Gastrocnemius medialis (tissue), 4 donors: ENCODE measurements at regions of chr19 and their contacts with region 1.

Region 1: DNA sequence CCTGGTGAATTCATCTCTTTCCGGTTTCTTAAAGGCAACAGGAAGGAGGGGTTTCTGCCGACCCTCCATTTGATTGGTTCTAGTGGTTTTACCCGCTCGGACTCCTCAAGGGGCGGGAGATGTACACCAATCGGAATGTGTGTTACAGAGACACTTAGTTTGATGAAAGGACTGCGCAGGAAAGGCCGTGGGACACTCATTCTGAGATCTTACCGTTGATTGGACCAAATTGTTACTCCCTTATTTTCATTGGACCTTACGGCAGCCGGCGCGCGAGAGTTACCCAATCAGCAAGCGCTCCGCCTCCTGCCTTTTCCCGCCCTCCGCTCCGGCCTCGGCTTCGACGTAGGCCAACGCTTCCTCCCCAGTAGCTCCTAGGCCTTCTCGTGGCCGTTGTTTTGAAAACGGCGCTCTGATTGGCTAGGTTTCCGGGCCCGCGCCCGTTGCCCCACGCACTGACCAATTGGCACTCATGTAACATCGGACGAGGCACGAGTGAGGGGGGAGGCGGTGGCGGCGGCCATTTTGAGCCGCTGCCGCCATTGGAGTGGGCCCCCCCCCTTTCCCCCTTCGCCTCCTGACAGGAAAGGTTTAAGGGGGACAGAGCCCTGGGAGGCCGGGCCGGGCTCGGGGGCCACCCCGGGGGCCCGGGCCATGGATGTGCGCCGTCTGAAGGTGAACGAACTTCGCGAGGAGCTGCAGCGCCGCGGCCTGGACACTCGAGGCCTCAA is at the start of gene HNRNPUL1:
- DNase-seq: peak; percentile 99
- ATAC-seq: peak; percentile 40 to 81
- H3K4me3 ChIP-seq: peak within 1 kb of the TSS; percentile 64 to 95 (median 87)
- H3K27ac ChIP-seq: peak within 1 kb of the TSS; percentile 97 to 100 (median 99)
- H3K4me1 ChIP-seq: peaks cover 26 to 32% of the 10 kb centered on the region in 2 donors
- H3K27me3 ChIP-seq: no peaks in the 10 kb centered on the region
- CTCF ChIP-seq: peak in 3 of 5 experiments; percentile 26 to 43 (median 37)
- POLR2A ChIP-seq: peak; percentile 39 to 58
- total RNA-seq, gene HNRNPUL1: 49.5 to 101 (median 92.4) TPM

Region 2: DNA sequence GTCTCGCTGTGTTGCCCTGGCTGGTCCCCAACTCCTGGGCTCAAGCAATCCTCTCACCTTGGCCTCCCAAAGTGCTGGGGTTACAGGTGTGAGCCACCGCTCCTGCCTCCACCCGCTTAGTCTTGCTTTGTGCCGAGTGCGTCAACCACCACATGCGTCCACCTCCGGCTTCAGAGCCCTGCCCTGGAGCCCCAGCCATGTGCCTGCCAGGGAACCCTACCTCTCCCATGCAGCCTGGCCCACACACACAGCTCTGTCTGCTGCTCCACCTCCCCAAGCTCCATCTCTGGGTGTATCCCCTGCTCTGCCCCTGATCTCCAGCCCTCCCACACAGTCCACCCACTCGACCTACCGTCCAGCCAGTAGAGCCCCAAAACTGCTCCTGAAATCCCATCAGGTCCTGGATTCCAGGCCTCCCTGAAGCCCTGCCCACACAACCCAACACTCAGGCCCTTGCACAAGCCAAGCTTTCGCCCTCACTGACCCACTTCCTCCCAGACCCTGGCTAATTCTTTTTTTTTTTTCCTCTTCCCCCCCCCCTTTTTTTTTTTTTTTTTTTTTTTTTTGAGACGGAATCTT is 140.2 kb before region 1 on chr19:
- in situ Hi-C with region 1: no loop called
- intact Hi-C with region 1: loop called (anchors 2 kb)
- DNase-seq: no peak
- ATAC-seq: no peak
- H3K4me3 ChIP-seq: no peak overlapping the region
- H3K27ac ChIP-seq: no peak overlapping the region
- H3K4me1 ChIP-seq: no peaks in the 10 kb centered on the region
- H3K27me3 ChIP-seq: no peaks in the 10 kb centered on the region
- CTCF ChIP-seq: no peak
- POLR2A ChIP-seq: no peak

Region 3: GRCh38 chr19:41226053-41226873 is 37.8 kb before region 1 on chr19:
- in situ Hi-C with region 1: no loop called
- intact Hi-C with region 1: loop called (anchors 1 kb)
- DNase-seq: peak in 1 of 2 donors; percentile 52
- ATAC-seq: peak; percentile 54 to 70
- H3K4me3 ChIP-seq: peak overlapping the region; percentile 41 to 60 (median 56)
- H3K27ac ChIP-seq: peak overlapping the region; percentile 68 to 80 (median 76)
- H3K4me1 ChIP-seq: peaks cover 6 to 10% of the 10 kb centered on the region in 2 donors
- H3K27me3 ChIP-seq: peaks cover 0 to 11% (median 11%) of the 10 kb centered on the region in 3 donors
- CTCF ChIP-seq: peak in 2 of 5 experiments; percentile 13 to 20
- POLR2A ChIP-seq: no peak

Region 4: GRCh38 chr19:41310033-41310758 is 46.2 kb after region 1 on chr19 and contains the start of gene CCDC97:
- in situ Hi-C with region 1: loop called in 1 of 4 experiments (anchors 5 kb)
- intact Hi-C with region 1: loop called (anchors 1 kb)
- DNase-seq: peak; percentile 72 to 82
- ATAC-seq: peak; percentile 76 to 78
- H3K4me3 ChIP-seq: peak within 1 kb of the TSS; percentile 62 to 80 (median 73)
- H3K27ac ChIP-seq: peak within 1 kb of the TSS; percentile 88 to 95 (median 93)
- H3K4me1 ChIP-seq: peaks cover 35 to 42% of the 10 kb centered on the region in 2 donors
- H3K27me3 ChIP-seq: no peaks in the 10 kb centered on the region
- CTCF ChIP-seq: peak in 2 of 5 experiments; percentile 23 to 36
- POLR2A ChIP-seq: peak; percentile 65 to 72
- total RNA-seq, gene CCDC97: 8.6 to 15.3 (median 15.1) TPM

Region 5: DNA sequence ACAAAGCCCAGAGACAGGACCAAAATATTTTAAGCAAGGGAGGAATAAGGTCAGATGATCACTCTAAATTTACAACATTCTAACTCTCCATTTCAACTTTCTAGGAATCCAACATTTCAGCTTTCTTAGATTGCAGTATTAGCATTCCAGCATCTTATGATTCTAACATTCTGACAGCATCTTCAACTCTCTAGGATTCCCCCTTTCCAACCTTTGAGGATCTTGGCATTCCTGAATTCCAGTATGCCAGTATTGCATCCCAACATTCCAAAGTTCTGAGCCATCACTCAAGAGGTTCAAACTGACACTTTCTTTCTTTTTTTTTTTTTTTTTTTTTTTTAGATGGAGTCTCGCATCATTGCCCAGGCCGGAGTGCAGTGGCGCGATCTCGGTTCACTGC is 75.9 kb after region 1 on chr19:
- in situ Hi-C with region 1: no loop called
- intact Hi-C with region 1: no loop called
- DNase-seq: no peak
- ATAC-seq: no peak
- H3K4me3 ChIP-seq: no peak overlapping the region
- H3K27ac ChIP-seq: no peak overlapping the region
- H3K4me1 ChIP-seq: no peaks in the 10 kb centered on the region
- H3K27me3 ChIP-seq: no peaks in the 10 kb centered on the region
- CTCF ChIP-seq: no peak
- POLR2A ChIP-seq: no peak

Region 6: DNA sequence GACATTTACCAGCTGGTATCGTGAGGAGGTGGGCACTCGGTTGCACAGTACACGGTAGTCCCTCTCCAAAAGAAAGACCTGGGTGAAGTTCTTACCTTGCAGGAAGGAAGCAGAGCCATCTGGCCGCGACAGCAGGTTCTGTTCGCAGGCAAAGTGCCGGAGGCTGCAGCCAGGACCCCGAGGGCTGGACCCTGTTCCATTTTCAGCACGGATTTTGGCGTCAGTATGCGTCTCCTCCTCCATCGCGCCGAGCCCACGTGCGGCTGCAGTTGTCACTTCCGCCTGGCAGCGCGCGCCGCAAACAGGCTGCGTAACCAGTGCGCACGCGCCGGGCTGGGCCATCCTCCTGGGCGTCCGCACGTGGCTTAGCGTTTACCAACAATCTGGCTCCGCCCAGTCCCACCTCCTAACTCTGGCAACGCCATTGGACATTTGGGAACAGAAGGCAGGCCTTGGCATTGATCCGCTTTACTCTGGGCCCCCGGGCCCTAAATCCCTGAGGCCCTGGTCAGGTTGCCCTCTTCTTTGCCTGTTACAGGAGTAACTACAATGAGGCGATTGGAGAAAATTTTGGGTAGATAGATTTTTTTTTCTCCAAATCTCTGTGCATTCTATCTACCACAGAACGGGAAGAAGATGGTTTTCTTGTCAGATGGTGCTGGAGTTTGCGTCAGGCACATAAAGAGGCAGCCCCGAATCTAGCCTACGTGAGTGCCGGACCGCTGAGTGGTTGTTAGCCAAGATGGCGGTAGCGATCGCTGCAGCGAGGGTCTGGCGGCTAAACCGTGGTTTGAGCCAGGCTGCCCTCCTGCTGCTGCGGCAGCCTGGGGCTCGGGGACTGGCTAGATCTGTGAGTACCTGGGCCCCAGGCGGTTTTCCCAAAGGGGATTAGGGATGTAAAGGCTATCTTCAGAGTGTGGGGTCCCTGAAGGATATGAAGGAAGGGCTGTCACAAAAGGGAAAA is 133.4 kb after region 1 on chr19 and contains the starts of genes BCKDHA and EXOSC5:
- in situ Hi-C with region 1: no loop called
- intact Hi-C with region 1: loop called (anchors 1 kb)
- DNase-seq: peak; percentile 99 to 100
- ATAC-seq: peak; percentile 98 to 99
- H3K4me3 ChIP-seq: peak within 1 kb of the TSS; percentile 89 to 95 (median 92)
- H3K27ac ChIP-seq: peak within 1 kb of the TSS; percentile 90 to 97 (median 94)
- H3K4me1 ChIP-seq: peaks cover 23 to 25% of the 10 kb centered on the region in 2 donors
- H3K27me3 ChIP-seq: no peaks in the 10 kb centered on the region
- CTCF ChIP-seq: peak in 1 of 5 experiments; percentile 12
- POLR2A ChIP-seq: peak; percentile 50 to 67
- total RNA-seq, gene BCKDHA: 80.8 to 115 (median 84.1) TPM
- total RNA-seq, gene EXOSC5: 29.1 to 61.9 (median 40.9) TPM